ENCODE measurements at regions of chr16 and their contacts with region 1.

Region 1: DNA sequence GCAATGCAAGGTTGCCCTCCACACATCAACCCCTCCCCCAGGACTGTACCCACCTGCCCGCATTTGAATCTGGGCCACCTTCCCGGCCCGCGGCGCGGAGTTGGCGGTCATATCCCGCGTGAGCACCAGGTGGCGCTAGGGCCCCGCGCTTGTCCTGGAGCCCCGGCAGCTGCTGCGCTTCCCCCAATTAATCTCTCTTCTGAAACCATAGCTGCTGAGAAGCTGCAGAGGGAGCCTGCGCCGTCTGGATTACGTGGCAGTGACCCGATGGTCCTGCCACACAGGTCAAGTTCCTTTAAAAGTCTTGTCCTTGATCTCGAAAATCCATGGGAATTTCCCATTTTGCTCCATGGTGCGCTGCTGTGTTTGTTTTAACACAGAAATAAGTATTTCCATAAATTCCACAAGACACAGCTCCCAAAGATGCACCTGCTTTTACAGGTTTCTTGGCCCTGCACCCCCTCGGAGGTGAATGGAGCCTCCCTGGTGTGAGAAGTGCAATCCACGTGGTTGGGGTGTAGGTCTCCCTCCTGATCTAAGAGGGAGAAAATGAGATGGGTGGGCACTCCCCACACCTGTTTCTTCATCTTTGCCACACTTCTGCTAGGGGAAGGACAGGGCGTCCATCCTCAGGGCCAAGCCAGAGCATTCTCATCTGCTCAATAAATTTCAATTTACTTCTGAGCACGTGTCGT is 22.1 kb downstream of the COX4I1 start:
- DNase-seq: peak; percentile 85

Region 2: GRCh38 chr16:85986931-85987749 is 165.6 kb after region 1 on chr16:
- intact Hi-C with region 1: loop called (anchors 1 kb)
- DNase-seq: peak; percentile 64

Region 3: GRCh38 chr16:86016201-86016871 is 194.7 kb after region 1 on chr16:
- intact Hi-C with region 1: loop called (anchors 1 kb)
- DNase-seq: peak; percentile 51

Measured in cardiac septum (tissue), 1 donor.